ENCODE measurements at regions of chr2 and their contacts with region 1.

Region 1: DNA sequence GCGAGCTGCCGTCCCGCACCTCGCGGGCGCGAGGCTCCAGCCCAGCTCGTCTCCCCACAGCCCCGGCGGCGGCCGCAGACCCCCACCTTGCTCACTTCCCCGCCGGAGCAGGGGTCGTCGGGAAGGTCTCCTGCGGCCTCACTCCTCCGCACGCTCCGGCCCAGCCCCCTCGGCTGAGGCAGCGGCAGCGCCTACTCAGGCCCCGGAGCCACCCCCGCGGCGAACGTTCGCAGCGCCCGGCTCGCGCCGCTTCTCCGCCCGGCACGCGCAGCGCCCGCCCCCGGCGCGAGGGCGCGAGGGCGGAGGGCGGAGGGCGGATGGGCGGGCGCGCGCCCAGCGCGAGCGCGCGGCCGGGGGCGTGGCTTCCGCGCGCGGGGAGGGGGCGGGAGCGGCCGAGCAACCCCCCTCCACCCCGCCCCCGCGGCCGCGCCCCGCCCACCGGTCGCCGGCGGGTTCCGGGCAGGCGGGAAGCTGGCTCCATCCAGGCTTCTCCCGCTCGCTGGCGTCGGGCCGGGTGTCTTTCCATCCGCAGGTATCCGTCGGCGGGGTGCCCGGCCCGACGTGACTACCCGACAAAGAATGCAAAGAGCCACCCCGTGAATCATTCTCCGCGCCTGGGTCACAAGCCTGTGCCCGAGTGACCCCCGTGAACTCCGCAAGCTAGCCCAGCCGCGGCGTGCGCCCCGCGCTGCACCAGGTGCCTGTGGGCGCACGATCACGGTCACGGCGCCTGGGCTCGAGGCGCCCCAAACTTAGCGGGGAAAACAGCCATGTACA is at the start of gene DTNB:
- DNase-seq: peak; percentile 49 to 84 (median 65)
- H3K4me3 ChIP-seq: peak within 1 kb of the TSS; percentile 67 to 97 (median 82)
- H3K27ac ChIP-seq: peak within 1 kb of the TSS; percentile 25 to 96 (median 89)
- H3K27me3 ChIP-seq: no peaks in the 10 kb centered on the region
- CTCF ChIP-seq: no peak
- total RNA-seq, gene DTNB: 74.4 to 162 (median 104) TPM

Region 2: GRCh38 chr2:25362049-25362433 is 311.4 kb before region 1 on chr2:
- intact Hi-C with region 1: loop called in 1 of 2 experiments (anchors 10 kb)
- DNase-seq: peak; percentile 86 to 93 (median 90)
- H3K4me3 ChIP-seq: peak overlapping the region; percentile 35 to 74 (median 55)
- H3K27ac ChIP-seq: peak overlapping the region in 46 of 59 donors; percentile 4 to 80 (median 52)
- H3K27me3 ChIP-seq: no peaks in the 10 kb centered on the region
- CTCF ChIP-seq: peak; percentile 93 to 99 (median 98)

Region 3: DNA sequence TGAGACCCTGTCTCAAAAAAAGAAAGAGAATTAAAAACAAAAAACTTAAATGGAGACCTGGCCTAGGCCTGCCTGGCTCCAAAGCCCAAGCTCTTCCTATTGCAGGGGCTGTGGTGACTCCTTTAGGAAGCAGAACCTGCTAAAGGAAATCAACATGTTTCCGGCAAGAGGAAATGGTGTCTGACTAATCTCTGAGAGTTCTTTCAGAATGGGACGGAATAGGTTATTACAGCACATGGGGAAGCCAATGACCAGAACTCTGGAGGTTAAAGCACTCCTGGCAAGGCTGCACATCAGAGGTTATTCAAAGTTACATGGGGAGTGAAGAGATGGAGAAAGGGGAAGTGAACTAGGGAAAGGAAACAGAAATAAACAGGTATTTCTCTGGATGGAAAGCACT is 287.4 kb after region 1 on chr2:
- intact Hi-C with region 1: no loop called
- DNase-seq: no peak
- H3K4me3 ChIP-seq: no peak overlapping the region
- H3K27ac ChIP-seq: peak overlapping the region in 41 of 59 donors; percentile 1 to 71 (median 41)
- H3K27me3 ChIP-seq: no peaks in the 10 kb centered on the region
- CTCF ChIP-seq: no peak

Region 4: DNA sequence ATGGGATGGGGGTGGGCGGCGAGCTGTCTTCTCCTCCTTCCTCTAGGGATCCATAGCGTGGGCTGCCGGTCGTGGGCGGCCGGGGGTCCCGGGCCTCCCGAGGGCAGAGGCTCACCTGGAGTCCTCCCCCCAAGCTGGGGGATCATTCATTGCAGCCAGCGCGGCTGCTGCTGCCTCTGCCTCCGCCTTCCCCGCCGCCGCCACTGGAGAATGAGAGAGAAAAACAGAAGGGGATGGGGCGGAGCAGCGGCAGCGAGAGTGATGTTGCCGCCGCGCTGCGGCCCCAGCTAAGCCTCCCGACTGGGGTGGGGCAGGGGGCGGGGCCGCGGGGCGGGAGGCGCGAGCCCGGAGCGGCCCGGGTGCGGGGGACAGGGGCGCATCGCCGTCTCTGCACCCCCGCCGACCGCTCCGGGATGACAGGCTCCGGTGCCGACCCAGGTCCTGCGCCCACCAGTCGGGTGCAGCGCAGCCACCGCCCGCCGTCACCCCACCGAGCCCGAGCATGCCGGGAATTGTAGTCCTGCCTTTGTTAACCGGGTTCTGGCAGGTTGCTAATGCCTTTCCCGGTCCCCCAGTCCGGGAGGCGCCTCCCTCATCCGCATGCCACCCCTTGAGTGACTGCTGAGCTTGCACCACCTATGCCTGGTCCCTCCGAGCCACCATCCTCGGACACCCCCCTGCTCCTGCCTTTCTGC is 308.9 kb after region 1 on chr2 and contains the start of gene KIF3C:
- intact Hi-C with region 1: loop called in 1 of 2 experiments (anchors 10 kb)
- DNase-seq: peak; percentile 69 to 93 (median 88)
- H3K4me3 ChIP-seq: peak within 1 kb of the TSS; percentile 69 to 98 (median 90)
- H3K27ac ChIP-seq: peak within 1 kb of the TSS; percentile 28 to 95 (median 89)
- H3K27me3 ChIP-seq: no peaks in the 10 kb centered on the region
- CTCF ChIP-seq: peak in 14 of 56 donors; percentile 2 to 33 (median 21)
- total RNA-seq, gene KIF3C: 82.2 to 364 (median 248) TPM